ENCODE measurements at regions of chr15 and their contacts with region 1.

Region 1: GRCh38 chr15:96261575-96262034 is 68.9 kb upstream of the NR2F2 start:
- DNase-seq: no peak
- H3K4me3 ChIP-seq: no peak overlapping the region
- H3K27ac ChIP-seq: peak overlapping the region in 1 of 2 donors; percentile 41
- H3K4me1 ChIP-seq: no peaks in the 10 kb centered on the region
- H3K27me3 ChIP-seq: no peaks in the 10 kb centered on the region
- CTCF ChIP-seq: no peak
- POLR2A ChIP-seq: no peak

Region 2: DNA sequence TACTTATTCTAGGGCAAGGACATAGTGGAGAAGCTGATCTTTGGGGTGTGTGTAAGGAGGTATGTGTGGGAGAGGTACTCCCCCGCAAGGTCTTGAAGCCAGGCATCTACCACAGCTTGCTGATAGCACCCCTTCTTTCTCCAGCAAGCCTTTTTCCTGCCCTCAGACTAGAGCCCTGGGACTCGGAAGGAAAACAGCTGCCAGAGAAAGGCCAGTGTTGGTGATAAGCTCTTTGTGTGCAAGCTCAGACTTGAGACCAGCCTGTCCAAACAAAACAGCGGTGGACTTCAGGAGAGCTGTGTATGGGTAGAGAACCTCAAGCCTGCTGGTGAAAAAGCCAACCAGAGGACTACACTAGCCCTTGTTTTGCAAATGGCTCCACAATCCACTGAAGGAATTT is 1001.6 kb before region 1 on chr15:
- intact Hi-C with region 1: loop called (anchors 10 kb)
- DNase-seq: no peak
- H3K4me3 ChIP-seq: no peak overlapping the region
- H3K27ac ChIP-seq: no peak overlapping the region
- H3K4me1 ChIP-seq: no peaks in the 10 kb centered on the region
- H3K27me3 ChIP-seq: no peaks in the 10 kb centered on the region
- CTCF ChIP-seq: no peak
- POLR2A ChIP-seq: no peak

Region 3: GRCh38 chr15:95912066-95912625 is 349.5 kb before region 1 on chr15:
- intact Hi-C with region 1: no loop called
- DNase-seq: no peak
- H3K4me3 ChIP-seq: no peak overlapping the region
- H3K27ac ChIP-seq: no peak overlapping the region
- H3K4me1 ChIP-seq: no peaks in the 10 kb centered on the region
- H3K27me3 ChIP-seq: no peaks in the 10 kb centered on the region
- CTCF ChIP-seq: no peak
- POLR2A ChIP-seq: no peak

Region 4: DNA sequence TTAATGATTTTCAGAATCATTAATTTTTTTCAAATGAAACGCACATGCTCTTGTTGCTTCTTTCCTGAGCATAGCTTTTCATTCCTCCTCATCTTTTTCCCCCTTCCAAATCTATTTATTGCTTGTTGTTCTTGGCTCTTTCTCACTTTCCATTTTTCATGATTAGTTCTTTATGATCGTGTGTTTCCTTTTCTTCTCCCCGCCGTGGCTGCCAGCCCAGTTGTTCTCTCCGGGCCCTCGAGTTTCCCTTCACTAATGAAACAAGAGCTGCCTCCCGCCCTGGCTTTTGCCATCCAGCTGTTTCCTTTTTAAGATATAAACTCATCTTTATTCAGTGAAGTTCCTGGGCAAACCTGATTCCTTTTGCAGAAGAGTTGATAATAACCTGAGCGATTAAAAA is 101.3 kb before region 1 on chr15:
- intact Hi-C with region 1: loop called (anchors 10 kb)
- DNase-seq: peak; percentile 36
- H3K4me3 ChIP-seq: no peak overlapping the region
- H3K27ac ChIP-seq: peak overlapping the region in 1 of 2 donors; percentile 48
- H3K4me1 ChIP-seq: no peaks in the 10 kb centered on the region
- H3K27me3 ChIP-seq: no peaks in the 10 kb centered on the region
- CTCF ChIP-seq: no peak
- POLR2A ChIP-seq: no peak

Region 5: GRCh38 chr15:96321639-96322535 is 60.3 kb after region 1 on chr15:
- intact Hi-C with region 1: loop called (anchors 5 kb)
- DNase-seq: peak; percentile 4
- H3K4me3 ChIP-seq: peak overlapping the region; percentile 28 to 37
- H3K27ac ChIP-seq: peak overlapping the region; percentile 83 to 92
- H3K4me1 ChIP-seq: no peaks in the 10 kb centered on the region
- H3K27me3 ChIP-seq: no peaks in the 10 kb centered on the region
- CTCF ChIP-seq: peak in 1 of 4 experiments; percentile 23
- POLR2A ChIP-seq: no peak

Region 6: GRCh38 chr15:96582473-96582872 is 320.9 kb after region 1 on chr15:
- intact Hi-C with region 1: no loop called
- DNase-seq: no peak
- H3K4me3 ChIP-seq: no peak overlapping the region
- H3K27ac ChIP-seq: no peak overlapping the region
- H3K4me1 ChIP-seq: no peaks in the 10 kb centered on the region
- H3K27me3 ChIP-seq: no peaks in the 10 kb centered on the region
- CTCF ChIP-seq: no peak
- POLR2A ChIP-seq: no peak

Measured in prostate gland (tissue), 2 donors.